OCI-LY7 (cell line): ENCODE measurements at regions of chr1 and their contacts with region 1.

Region 1: GRCh38 chr1:94783342-94784264 is 36.6 kb upstream of the SLC44A3 start:
- DNase-seq: no peak
- H3K4me3 ChIP-seq: no peak overlapping the region
- H3K27ac ChIP-seq: no peak overlapping the region
- H3K4me1 ChIP-seq: no peaks in the 10 kb centered on the region
- CTCF ChIP-seq: no peak

Region 2: GRCh38 chr1:94831641-94832040 is 48.0 kb after region 1 on chr1:
- CTCF ChIA-PET with region 1: no interaction called
- POLR2A ChIA-PET with region 1: no interaction called
- intact Hi-C with region 1: loop called (anchors 2 kb)
- DNase-seq: no peak
- H3K4me3 ChIP-seq: no peak overlapping the region
- H3K27ac ChIP-seq: no peak overlapping the region
- H3K4me1 ChIP-seq: no peaks in the 10 kb centered on the region
- CTCF ChIP-seq: no peak